Activated CD4-positive, alpha-beta T cell treated with anti-CD3 and anti-CD28 coated beads, Interleukin-2, amount 10 ng/mL, durations not matched to agents 24 days and 14 days (primary cell): ENCODE measurements at regions of chr6 and their contacts with region 1.

Region 1: GRCh38 chr6:42777126-42777822 is 4.6 kb upstream of the BICRAL start:
- DNase-seq: no peak
- H3K4me3 Mint-ChIP-seq: peak overlapping the region; percentile 33
- H3K27ac Mint-ChIP-seq: peak overlapping the region; percentile 77
- H3K4me1 Mint-ChIP-seq: peaks cover 53% of the 10 kb centered on the region
- H3K27me3 Mint-ChIP-seq: no peaks in the 10 kb centered on the region

Region 2: GRCh38 chr6:42813906-42814444 is 36.7 kb after region 1 on chr6:
- intact Hi-C with region 1: loop called (anchors 5 kb)
- DNase-seq: no peak
- H3K4me3 Mint-ChIP-seq: no peak overlapping the region
- H3K27ac Mint-ChIP-seq: peak overlapping the region; percentile 43
- H3K4me1 Mint-ChIP-seq: peaks cover 5% of the 10 kb centered on the region
- H3K27me3 Mint-ChIP-seq: no peaks in the 10 kb centered on the region